ENCODE measurements at regions of chr16 and their contacts with region 1.

Region 1: DNA sequence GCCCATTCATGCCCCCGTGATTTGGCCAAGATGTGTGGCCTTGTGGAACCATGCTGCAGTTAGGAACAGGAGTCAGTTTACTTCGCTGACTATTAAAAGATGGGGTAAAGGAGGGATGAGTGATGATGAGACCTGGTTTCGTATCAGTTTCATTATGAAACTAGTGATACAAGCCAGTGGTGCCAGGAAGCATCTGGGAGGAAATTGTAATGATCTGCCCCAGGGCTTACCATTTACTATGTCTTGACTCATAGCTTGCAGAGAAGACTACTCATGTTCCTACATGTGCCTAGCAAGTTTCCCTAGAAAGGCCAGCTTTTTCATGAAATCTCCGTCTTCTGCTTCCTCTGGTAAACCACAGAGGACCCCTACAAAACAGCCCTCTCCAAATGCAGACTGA is 23.2 kb downstream of the CDH3 start:
- DNase-seq: peak; percentile 95
- H3K4me3 Mint-ChIP-seq: peak overlapping the region; percentile 48
- H3K27ac Mint-ChIP-seq: peak overlapping the region; percentile 92
- H3K4me1 Mint-ChIP-seq: peaks cover 36% of the 10 kb centered on the region
- H3K27me3 Mint-ChIP-seq: no peaks in the 10 kb centered on the region
- CTCF ChIP-seq: no peak

Region 2: GRCh38 chr16:68499006-68499405 is 169.3 kb before region 1 on chr16:
- CTCF ChIA-PET with region 1: no interaction called
- POLR2A ChIA-PET with region 1: no interaction called
- intact Hi-C with region 1: no loop called
- DNase-seq: no peak
- H3K4me3 Mint-ChIP-seq: no peak overlapping the region
- H3K27ac Mint-ChIP-seq: no peak overlapping the region
- H3K4me1 Mint-ChIP-seq: peaks cover 11% of the 10 kb centered on the region
- H3K27me3 Mint-ChIP-seq: no peaks in the 10 kb centered on the region
- CTCF ChIP-seq: no peak

Region 3: DNA sequence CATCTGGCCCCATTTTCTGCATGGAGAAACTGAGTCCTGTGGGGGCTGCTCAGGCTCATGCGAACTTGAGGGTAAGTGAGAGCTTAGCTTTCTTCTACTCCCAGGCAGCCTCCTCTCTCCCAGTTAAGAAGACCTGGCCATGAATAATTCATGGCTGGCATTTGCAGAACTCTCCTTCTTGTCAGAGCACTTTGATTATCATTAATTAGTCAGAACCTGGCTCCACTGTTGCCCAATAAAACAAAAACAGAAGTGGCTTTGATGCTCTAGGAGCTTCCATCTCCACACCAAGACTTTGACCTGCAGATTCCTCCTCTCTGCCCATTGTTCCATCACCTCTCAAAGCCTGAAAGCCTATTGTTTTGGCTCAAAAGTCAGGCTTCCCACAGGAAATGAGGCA is 68.7 kb before region 1 on chr16:
- CTCF ChIA-PET with region 1: interaction called, 3 read pairs
- POLR2A ChIA-PET with region 1: interaction called, 23 read pairs
- intact Hi-C with region 1: no loop called
- DNase-seq: no peak
- H3K4me3 Mint-ChIP-seq: no peak overlapping the region
- H3K27ac Mint-ChIP-seq: no peak overlapping the region
- H3K4me1 Mint-ChIP-seq: peaks cover 10% of the 10 kb centered on the region
- H3K27me3 Mint-ChIP-seq: no peaks in the 10 kb centered on the region
- CTCF ChIP-seq: no peak

Region 4: GRCh38 chr16:68605746-68606145 is 62.5 kb before region 1 on chr16:
- CTCF ChIA-PET with region 1: no interaction called
- POLR2A ChIA-PET with region 1: interaction called, 12 read pairs
- intact Hi-C with region 1: no loop called
- DNase-seq: peak; percentile 87
- H3K4me3 Mint-ChIP-seq: no peak overlapping the region
- H3K27ac Mint-ChIP-seq: peak overlapping the region; percentile 18
- H3K4me1 Mint-ChIP-seq: peaks cover 9% of the 10 kb centered on the region
- H3K27me3 Mint-ChIP-seq: no peaks in the 10 kb centered on the region
- CTCF ChIP-seq: no peak

Measured in MCF 10A (cell line).